Tibial artery (tissue), 4 donors: ENCODE measurements at regions of chr17 and their contacts with region 1.

Region 1: DNA sequence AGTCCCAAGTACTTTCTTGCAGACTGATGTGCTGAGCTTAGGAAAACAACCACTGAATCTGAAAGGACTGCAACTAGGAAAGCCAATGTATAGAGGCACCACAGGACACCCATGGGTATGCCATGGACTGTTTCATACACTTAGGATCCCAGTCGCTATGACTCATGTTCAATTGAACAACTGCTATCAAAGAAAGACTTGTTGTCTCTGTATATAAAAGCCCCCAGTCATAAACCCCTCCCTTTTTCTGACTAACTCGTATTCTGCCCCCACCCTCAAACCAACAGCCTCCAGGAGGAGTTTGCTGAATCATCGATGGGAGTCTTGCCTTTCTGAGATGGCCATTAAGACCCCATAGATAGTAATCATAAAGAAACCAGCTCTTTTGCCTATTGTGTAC is 205.4 kb downstream of the ANKFN1 start:
- DNase-seq: no peak
- H3K4me3 ChIP-seq: no peak overlapping the region
- H3K27ac ChIP-seq: no peak overlapping the region
- H3K4me1 ChIP-seq: no peaks in the 10 kb centered on the region
- H3K27me3 ChIP-seq: no peaks in the 10 kb centered on the region
- CTCF ChIP-seq: no peak

Region 2: DNA sequence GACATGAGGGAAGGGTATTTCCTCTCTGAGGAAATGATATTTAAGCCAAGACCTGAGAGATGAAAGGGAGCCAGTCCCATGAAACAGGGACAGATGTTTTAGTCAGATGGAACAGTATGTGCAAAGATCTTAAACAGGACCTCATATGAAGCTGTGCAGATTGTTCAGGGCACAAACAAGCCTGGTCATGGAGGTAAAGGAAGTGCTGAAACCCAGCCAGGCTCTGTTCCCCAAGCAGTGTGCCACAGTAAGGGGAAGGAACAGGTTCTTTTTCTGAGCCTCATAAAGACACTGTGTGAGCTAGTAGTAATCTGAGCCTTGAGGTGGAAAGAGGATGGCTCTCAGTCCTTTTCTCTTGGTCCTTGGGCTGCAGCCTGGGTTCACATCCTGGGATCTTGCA is 45.5 kb before region 1 on chr17:
- intact Hi-C with region 1: loop called (anchors 2 kb)
- DNase-seq: no peak
- H3K4me3 ChIP-seq: no peak overlapping the region
- H3K27ac ChIP-seq: no peak overlapping the region
- H3K4me1 ChIP-seq: no peaks in the 10 kb centered on the region
- H3K27me3 ChIP-seq: no peaks in the 10 kb centered on the region
- CTCF ChIP-seq: no peak